ENCODE measurements at regions of chr11 and their contacts with region 1.

Region 1: DNA sequence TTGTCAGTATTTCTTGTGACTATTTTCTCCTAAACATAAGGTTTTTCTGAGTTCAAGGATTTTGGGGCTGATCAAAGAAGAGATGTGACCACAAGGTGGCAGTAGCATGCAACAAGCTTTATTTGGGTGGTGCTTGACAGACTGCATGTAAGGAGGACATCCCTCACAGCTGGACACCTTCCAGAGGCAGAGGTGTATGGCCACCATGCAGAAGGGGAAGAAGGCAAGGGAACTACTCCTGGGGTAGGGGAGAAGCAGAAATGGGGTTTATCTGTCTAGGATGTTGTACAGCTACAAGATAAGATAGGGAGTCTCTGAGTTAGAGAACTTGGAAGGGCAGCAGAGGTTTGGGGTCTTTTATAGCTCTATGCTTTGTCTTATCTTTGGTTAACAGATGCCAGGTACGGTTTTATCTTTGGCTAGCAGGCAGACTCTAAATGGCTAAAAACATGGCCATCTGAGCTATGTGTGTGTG is 5.1 kb upstream of the BIRC2 start:
- DNase-seq: peak; percentile 90
- H3K4me3 Mint-ChIP-seq: no peak overlapping the region
- H3K27ac Mint-ChIP-seq: no peak overlapping the region
- H3K4me1 Mint-ChIP-seq: peaks cover 46% of the 10 kb centered on the region
- H3K27me3 Mint-ChIP-seq: no peaks in the 10 kb centered on the region

Region 2: DNA sequence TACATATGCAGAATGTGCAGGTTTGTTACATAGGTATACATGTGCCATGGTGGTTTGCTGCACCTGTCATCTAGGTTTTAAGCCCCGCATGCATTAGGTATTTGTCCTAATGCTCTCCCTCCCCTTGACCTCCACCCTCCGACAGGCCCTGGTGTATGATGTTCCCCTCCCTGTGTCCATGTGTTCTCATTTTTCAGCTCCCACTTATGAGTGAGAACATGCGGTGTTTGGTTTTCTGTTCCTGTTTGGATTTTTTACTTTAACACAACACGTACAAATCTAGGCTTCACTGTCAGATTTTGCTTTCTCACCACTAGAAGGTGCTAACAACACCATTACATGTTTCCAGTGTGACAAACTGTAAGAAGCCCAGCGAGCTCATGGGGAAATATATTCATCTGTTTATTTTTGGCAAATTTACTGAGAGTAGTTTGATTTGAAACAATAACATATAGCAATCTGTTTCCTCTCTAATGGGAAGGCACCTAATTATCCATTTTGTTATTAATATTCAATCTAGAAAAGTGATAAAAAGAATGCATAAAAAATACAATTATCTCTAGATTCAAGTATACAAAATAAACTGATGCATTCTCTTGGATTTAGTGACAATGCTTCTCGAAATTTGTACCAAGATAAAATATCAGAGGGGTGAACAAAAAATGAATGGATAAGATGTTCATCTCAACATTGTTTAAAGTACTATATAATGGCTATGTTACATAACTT is 47.8 kb before region 1 on chr11:
- CTCF ChIA-PET with region 1: interaction called, 49 read pairs
- intact Hi-C with region 1: loop called (anchors 1 kb)
- DNase-seq: peak; percentile 35
- H3K4me3 Mint-ChIP-seq: peak overlapping the region; percentile 74
- H3K27ac Mint-ChIP-seq: peak overlapping the region; percentile 85
- H3K4me1 Mint-ChIP-seq: peaks cover 21% of the 10 kb centered on the region
- H3K27me3 Mint-ChIP-seq: no peaks in the 10 kb centered on the region

Region 3: GRCh38 chr11:102390667-102391465 is 49.0 kb after region 1 on chr11:
- CTCF ChIA-PET with region 1: interaction called, 29 read pairs
- intact Hi-C with region 1: loop called (anchors 1 kb)
- DNase-seq: peak; percentile 72
- H3K4me3 Mint-ChIP-seq: no peak overlapping the region
- H3K27ac Mint-ChIP-seq: peak overlapping the region; percentile 29
- H3K4me1 Mint-ChIP-seq: peaks cover 40% of the 10 kb centered on the region
- H3K27me3 Mint-ChIP-seq: no peaks in the 10 kb centered on the region

Region 4: DNA sequence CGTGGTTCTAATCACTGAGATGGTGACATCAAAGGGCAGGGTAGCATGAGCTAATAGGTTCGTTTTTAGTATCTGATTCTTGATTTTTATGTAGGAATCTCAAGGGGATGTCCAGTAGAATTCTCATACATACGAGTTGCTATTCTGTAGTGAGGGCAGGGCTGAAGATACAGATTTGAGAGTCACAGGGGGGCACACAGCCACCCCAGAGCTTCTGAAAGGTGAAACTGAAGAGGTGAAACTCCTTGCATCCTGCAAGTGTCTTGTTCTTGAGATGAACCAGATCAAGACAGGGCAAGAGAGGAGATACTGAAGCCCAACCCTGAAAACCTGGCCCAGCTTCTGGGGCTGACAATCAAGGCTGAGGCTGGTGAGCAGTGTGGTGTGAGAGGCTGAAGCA is 146.3 kb after region 1 on chr11:
- CTCF ChIA-PET with region 1: interaction called, 31 read pairs
- intact Hi-C with region 1: no loop called
- DNase-seq: no peak
- H3K4me3 Mint-ChIP-seq: peak overlapping the region; percentile 13
- H3K27ac Mint-ChIP-seq: peak overlapping the region; percentile 42
- H3K4me1 Mint-ChIP-seq: peaks cover 63% of the 10 kb centered on the region
- H3K27me3 Mint-ChIP-seq: no peaks in the 10 kb centered on the region

Region 5: GRCh38 chr11:102666331-102666957 is 324.6 kb after region 1 on chr11:
- CTCF ChIA-PET with region 1: interaction called, 45 read pairs
- intact Hi-C with region 1: loop called (anchors 1 kb)
- DNase-seq: peak; percentile 28
- H3K4me3 Mint-ChIP-seq: no peak overlapping the region
- H3K27ac Mint-ChIP-seq: no peak overlapping the region
- H3K4me1 Mint-ChIP-seq: no peaks in the 10 kb centered on the region
- H3K27me3 Mint-ChIP-seq: no peaks in the 10 kb centered on the region

Measured in activated naive CD4-positive, alpha-beta T cell treated with anti-CD3 and anti-CD28 coated beads for 36 hours (primary cell).